HEK293 (cell line): ENCODE measurements at regions of chr13 and their contacts with region 1.

Region 1: GRCh38 chr13:21043898-21044297 is 17.5 kb downstream of the LATS2 start:
- H3K4me3 ChIP-seq: no peak overlapping the region
- H3K27ac ChIP-seq: no peak overlapping the region; the same call in 1 of the 2 replicates
- H3K4me1 ChIP-seq: peaks cover 3% of the 10 kb centered on the region; the same call in 1 of the 2 replicates
- CTCF ChIP-seq: no peak

Region 2: GRCh38 chr13:20993661-20994440 is 50.0 kb before region 1 on chr13:
- CTCF ChIA-PET with region 1: no interaction called
- POLR2A ChIA-PET with region 1: no interaction called
- H3K4me3 ChIP-seq: no peak overlapping the region
- H3K27ac ChIP-seq: no peak overlapping the region
- H3K4me1 ChIP-seq: no peaks in the 10 kb centered on the region
- CTCF ChIP-seq: no peak

Region 3: GRCh38 chr13:21884965-21885567 is 841.2 kb after region 1 on chr13:
- CTCF ChIA-PET with region 1: interaction called, 11 read pairs
- POLR2A ChIA-PET with region 1: no interaction called
- H3K4me3 ChIP-seq: no peak overlapping the region
- H3K27ac ChIP-seq: no peak overlapping the region
- H3K4me1 ChIP-seq: no peaks in the 10 kb centered on the region
- CTCF ChIP-seq: no peak